Left colon (tissue), 2 donors: ENCODE measurements at regions of chr17 and their contacts with region 1.

Region 1: GRCh38 chr17:74457146-74457819 is 9.2 kb upstream of the CD300A start:
- DNase-seq: peak; percentile 60 to 85
- ATAC-seq: no peak

Region 2: DNA sequence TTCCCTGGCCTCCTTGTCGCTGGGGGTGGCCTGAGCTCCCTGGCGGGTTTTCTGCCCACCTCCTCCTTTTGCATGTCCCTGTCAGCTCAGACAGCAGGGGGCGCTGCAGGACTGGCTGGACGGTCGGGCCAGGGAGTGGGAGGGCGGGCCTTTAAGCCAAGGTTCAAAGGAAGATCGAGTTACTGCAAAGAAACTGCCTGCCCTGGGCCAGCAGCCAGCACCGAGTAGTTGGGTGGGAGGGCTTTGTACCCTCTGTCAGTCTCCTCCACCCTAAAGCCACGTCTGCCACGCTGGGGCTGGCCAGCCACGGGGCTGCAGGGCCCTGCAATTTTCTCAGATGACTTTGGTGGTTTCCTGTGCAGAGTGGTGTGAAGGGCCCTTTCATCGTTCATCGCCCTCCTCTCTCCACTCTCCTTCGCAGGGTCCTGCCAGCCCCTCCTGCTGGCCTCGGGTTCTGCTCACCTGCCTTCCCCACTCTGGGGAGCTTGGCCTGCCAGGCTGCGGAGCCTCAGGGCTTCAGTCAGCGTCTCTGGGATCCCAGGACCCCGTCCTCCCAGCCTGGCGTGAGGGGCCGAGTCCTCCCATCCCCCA is 77.7 kb before region 1 on chr17:
- intact Hi-C with region 1: loop called (anchors 2 to 5 kb)
- DNase-seq: peak; percentile 88 to 98
- ATAC-seq: peak; percentile 69